Activated B cell treated with CpG ODN at 0.5 μM for 24 hours (primary cell): ENCODE measurements at regions of chr1 and their contacts with region 1.

Region 1: DNA sequence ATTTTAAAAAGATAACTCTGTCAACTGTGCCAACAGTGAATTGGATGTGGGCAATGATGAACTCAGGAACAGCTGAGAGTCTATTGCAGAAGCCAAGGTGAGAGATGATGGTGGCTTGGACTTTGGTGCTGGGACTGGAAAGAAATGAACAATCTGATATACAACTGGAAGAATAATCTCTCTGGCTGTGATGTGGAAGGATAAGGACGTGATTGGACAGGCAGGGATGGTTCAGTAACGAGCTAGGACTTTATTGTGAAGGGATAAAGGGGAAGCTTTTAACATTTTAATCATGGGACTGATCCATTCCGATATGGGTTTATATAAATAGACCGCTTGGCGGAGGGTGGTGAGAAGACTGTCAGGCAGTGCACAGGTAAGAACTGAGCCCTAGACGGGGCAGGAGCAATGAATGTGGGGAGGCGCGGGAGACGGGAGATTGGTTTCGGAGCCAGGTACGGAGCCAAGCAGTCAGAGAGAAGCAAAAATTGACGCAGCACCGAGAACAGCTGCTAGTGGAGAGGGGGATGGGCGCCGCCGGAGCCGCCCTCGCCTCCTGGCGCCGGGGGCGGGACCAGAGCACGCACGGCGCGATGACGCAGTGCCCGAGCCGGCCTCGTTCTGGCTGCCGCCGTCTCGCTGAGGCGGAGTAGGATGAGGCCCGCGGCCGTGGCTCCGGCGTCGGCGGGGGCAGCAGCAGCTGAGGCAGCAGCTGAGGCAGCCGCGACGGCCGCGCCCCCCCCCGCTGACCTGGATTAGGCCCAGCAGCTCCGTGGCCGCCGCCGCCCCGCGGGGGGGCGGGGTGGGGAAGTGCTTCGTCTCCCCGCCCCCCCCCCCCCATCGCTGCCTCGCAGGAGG is at the start of gene RNF11:
- DNase-seq: peak; percentile 94
- ATAC-seq: peak; percentile 74
- H3K4me3 Mint-ChIP-seq: peak within 1 kb of the TSS; percentile 92
- H3K27ac Mint-ChIP-seq: peak within 1 kb of the TSS; percentile 93
- H3K4me1 Mint-ChIP-seq: peaks cover 24% of the 10 kb centered on the region
- H3K27me3 Mint-ChIP-seq: peaks cover 4% of the 10 kb centered on the region
- CTCF ChIP-seq: no peak
- total RNA-seq, gene RNF11: 15.3 and 17.1 TPM in 2 replicates

Region 2: GRCh38 chr1:51203121-51203873 is 32.6 kb before region 1 on chr1:
- CTCF ChIA-PET with region 1: no interaction called
- POLR2A ChIA-PET with region 1: no interaction called
- intact Hi-C with region 1: no loop called
- DNase-seq: no peak
- ATAC-seq: no peak
- H3K4me3 Mint-ChIP-seq: no peak overlapping the region
- H3K27ac Mint-ChIP-seq: no peak overlapping the region
- H3K4me1 Mint-ChIP-seq: no peaks in the 10 kb centered on the region
- H3K27me3 Mint-ChIP-seq: no peaks in the 10 kb centered on the region
- CTCF ChIP-seq: no peak

Region 3: GRCh38 chr1:51268634-51269033 is 32.7 kb after region 1 on chr1:
- CTCF ChIA-PET with region 1: no interaction called
- POLR2A ChIA-PET with region 1: interaction called, 18 read pairs
- intact Hi-C with region 1: loop called (anchors 1 kb)
- DNase-seq: no peak
- ATAC-seq: peak; percentile 14
- H3K4me3 Mint-ChIP-seq: peak overlapping the region; percentile 42
- H3K27ac Mint-ChIP-seq: peak overlapping the region; percentile 79
- H3K4me1 Mint-ChIP-seq: peaks cover 36% of the 10 kb centered on the region
- H3K27me3 Mint-ChIP-seq: no peaks in the 10 kb centered on the region
- CTCF ChIP-seq: no peak

Region 4: GRCh38 chr1:51296383-51297357 is 60.8 kb after region 1 on chr1:
- CTCF ChIA-PET with region 1: interaction called, 4 read pairs
- POLR2A ChIA-PET with region 1: interaction called, 10 read pairs
- intact Hi-C with region 1: loop called (anchors 2 kb)
- DNase-seq: peak; percentile 71
- ATAC-seq: peak; percentile 65
- H3K4me3 Mint-ChIP-seq: peak overlapping the region; percentile 68
- H3K27ac Mint-ChIP-seq: no peak overlapping the region
- H3K4me1 Mint-ChIP-seq: peaks cover 8% of the 10 kb centered on the region
- H3K27me3 Mint-ChIP-seq: peaks cover 2% of the 10 kb centered on the region
- CTCF ChIP-seq: peak; percentile 74

Region 5: DNA sequence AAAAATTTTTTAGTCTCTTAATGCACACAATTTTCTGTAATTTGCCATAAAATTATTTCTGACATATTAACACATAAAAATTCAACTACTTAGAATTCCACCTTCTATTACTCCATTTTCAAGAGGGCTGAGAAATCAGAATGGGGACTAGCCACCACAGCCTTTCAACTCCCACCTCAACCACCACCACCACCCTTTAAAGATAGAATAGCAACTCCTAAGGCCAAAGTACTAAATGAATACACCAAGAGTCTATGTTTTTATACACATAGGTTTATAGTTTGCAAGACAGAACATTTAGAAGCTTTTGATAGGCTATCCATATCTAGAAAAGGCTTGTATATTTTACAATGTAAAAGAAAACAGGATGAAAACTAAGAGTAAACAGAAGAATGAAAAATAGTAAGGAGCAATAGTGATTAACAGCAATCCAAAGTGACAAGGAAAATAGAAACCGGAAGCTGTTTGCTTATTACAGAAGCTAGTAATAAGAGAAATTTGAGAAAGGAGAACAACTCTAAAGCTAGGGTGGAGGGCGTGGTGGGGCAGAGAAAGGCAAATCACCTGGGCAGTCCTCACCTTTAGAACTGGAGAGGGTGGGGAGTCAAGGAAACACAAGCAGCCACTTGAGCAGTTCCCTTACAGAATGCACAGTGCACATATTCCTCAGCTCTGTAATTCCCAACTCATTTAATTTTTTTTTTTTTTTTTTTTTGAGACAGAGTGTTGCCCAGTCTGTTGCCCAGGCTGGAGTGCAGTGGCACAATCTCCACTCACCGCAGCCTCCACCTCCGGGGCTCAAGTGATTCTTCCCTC is 255.5 kb after region 1 on chr1:
- CTCF ChIA-PET with region 1: no interaction called
- POLR2A ChIA-PET with region 1: no interaction called
- intact Hi-C with region 1: no loop called
- DNase-seq: no peak
- ATAC-seq: peak; percentile 65
- H3K4me3 Mint-ChIP-seq: peak overlapping the region; percentile 68
- H3K27ac Mint-ChIP-seq: peak overlapping the region; percentile 85
- H3K4me1 Mint-ChIP-seq: peaks cover 69% of the 10 kb centered on the region
- H3K27me3 Mint-ChIP-seq: no peaks in the 10 kb centered on the region
- CTCF ChIP-seq: no peak